GM13977 (cell line): ENCODE measurements at regions of chr5 and their contacts with region 1.

Region 1: GRCh38 chr5:33997331-33997983 is 10.4 kb downstream of the AMACR start:
- DNase-seq: peak; percentile 47
- CTCF ChIP-seq: peak; percentile 68

Region 2: DNA sequence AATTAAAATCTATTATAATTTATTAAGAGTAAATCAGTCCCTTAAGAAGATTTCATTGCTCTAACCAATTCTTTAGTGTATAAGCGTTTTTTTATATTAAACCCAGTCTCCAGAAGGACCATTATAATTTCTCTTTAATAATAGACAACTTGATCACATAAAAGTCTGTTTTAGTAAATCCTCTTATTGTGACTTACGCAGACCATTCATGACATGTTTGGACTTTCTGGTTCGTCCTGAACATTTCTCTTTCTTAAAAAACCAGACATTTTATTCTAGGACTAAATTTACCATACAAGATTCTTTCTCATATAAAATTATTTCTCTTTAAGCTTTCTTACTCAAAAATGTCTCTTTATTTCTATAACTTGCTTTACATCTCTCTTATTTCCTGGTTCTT is 462.5 kb after region 1 on chr5:
- in situ Hi-C with region 1: loop called (anchors 10 kb)
- DNase-seq: no peak
- CTCF ChIP-seq: no peak